ENCODE measurements at regions of chr4 and their contacts with region 1.

Region 1: DNA sequence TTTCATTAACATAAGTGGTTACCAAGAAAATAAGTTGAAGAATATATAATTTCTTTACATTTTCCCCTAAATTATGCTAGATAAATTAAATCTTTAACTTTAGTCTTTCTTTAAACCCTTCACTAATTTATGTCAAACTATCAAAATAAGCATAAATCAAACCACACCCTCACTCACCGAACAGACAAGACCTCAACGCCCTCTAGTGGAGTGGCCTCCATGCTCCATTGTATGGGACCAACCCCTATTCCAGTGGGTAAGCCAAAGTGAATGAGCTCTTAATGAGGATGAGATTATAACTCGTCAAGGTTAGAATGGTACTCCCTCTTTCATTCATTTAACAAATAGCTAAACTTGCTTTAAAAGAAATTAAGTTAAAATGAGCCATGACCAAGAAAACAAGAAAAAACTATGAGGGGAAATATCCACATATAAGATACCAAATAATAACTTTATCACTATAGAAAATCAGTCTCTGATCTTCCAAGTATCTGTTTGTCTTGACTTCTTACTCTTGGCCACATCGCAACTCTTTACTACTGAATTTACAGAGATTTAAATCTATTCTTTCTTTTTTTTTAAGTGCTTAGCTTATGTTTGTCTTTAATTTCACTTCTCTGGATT is 15.6 kb upstream of the BBS12 start:
- DNase-seq: peak; percentile 26 to 77 (median 67)
- ATAC-seq: peak; percentile 91
- H3K4me3 ChIP-seq: no peak overlapping the region
- H3K4me3 Mint-ChIP-seq: no peak overlapping the region
- H3K27ac ChIP-seq: no peak overlapping the region
- H3K27ac Mint-ChIP-seq: no peak overlapping the region
- H3K4me1 ChIP-seq: no peaks in the 10 kb centered on the region
- H3K4me1 Mint-ChIP-seq: peaks cover 3% of the 10 kb centered on the region
- H3K27me3 ChIP-seq: no peaks in the 10 kb centered on the region
- H3K27me3 Mint-ChIP-seq: peaks cover 6% of the 10 kb centered on the region
- CTCF ChIP-seq: peak; percentile 85

Region 2: GRCh38 chr4:121900132-121900983 is 816.6 kb before region 1 on chr4:
- CTCF ChIA-PET with region 1: interaction called, 11 read pairs
- POLR2A ChIA-PET with region 1: no interaction called
- intact Hi-C with region 1: loop called (anchors 1 to 5 kb)
- DNase-seq: peak in 8 of 9 experiments; percentile 9 to 77 (median 50)
- ATAC-seq: peak; percentile 80
- H3K4me3 ChIP-seq: no peak overlapping the region
- H3K4me3 Mint-ChIP-seq: no peak overlapping the region
- H3K27ac ChIP-seq: no peak overlapping the region
- H3K27ac Mint-ChIP-seq: no peak overlapping the region
- H3K4me1 ChIP-seq: peaks cover 4% of the 10 kb centered on the region
- H3K4me1 Mint-ChIP-seq: peaks cover 10% of the 10 kb centered on the region
- H3K27me3 ChIP-seq: no peaks in the 10 kb centered on the region
- H3K27me3 Mint-ChIP-seq: peaks cover 10% of the 10 kb centered on the region
- CTCF ChIP-seq: peak; percentile 72

Region 3: GRCh38 chr4:121950212-121950679 is 766.7 kb before region 1 on chr4:
- CTCF ChIA-PET with region 1: no interaction called
- POLR2A ChIA-PET with region 1: no interaction called
- intact Hi-C with region 1: loop called in 1 of 2 experiments (anchors 1 kb)
- DNase-seq: peak; percentile 74 to 91 (median 85)
- ATAC-seq: peak; percentile 84
- H3K4me3 ChIP-seq: peak overlapping the region; percentile 65 to 71
- H3K4me3 Mint-ChIP-seq: peak overlapping the region; percentile 88
- H3K27ac ChIP-seq: peak overlapping the region in 1 of 2 experiments; percentile 34
- H3K27ac Mint-ChIP-seq: no peak overlapping the region
- H3K4me1 ChIP-seq: peaks cover 3% of the 10 kb centered on the region
- H3K4me1 Mint-ChIP-seq: peaks cover 8% of the 10 kb centered on the region
- H3K27me3 ChIP-seq: peaks cover 7 to 8% of the 10 kb centered on the region in 2 experiments
- H3K27me3 Mint-ChIP-seq: peaks cover 51% of the 10 kb centered on the region
- CTCF ChIP-seq: peak; percentile 86

Region 4: DNA sequence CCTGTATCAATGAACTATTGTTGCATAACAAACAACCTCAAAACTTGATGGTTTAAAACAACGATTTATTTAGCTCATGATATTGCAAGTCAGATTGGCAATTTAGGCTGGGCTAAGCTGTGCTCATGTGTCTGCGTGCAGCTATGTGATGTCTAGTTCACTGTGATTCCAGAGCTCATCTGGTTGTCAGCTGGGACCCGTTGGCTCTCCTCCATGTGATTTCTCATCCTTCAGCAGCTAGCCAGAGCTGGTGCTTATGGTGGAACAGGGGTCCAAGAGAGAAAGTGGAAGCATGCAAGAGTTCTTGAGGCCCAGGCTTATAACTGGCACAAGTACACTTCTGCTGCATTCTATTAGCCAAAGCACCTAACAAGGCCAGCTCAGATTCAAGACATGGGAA is 736.3 kb before region 1 on chr4:
- CTCF ChIA-PET with region 1: no interaction called
- POLR2A ChIA-PET with region 1: no interaction called
- intact Hi-C with region 1: no loop called
- DNase-seq: no peak
- ATAC-seq: no peak
- H3K4me3 ChIP-seq: no peak overlapping the region
- H3K4me3 Mint-ChIP-seq: no peak overlapping the region
- H3K27ac ChIP-seq: no peak overlapping the region
- H3K27ac Mint-ChIP-seq: no peak overlapping the region
- H3K4me1 ChIP-seq: peaks cover 15% of the 10 kb centered on the region
- H3K4me1 Mint-ChIP-seq: peaks cover 6% of the 10 kb centered on the region
- H3K27me3 ChIP-seq: no peaks in the 10 kb centered on the region
- H3K27me3 Mint-ChIP-seq: peaks cover 5% of the 10 kb centered on the region
- CTCF ChIP-seq: no peak

Region 5: DNA sequence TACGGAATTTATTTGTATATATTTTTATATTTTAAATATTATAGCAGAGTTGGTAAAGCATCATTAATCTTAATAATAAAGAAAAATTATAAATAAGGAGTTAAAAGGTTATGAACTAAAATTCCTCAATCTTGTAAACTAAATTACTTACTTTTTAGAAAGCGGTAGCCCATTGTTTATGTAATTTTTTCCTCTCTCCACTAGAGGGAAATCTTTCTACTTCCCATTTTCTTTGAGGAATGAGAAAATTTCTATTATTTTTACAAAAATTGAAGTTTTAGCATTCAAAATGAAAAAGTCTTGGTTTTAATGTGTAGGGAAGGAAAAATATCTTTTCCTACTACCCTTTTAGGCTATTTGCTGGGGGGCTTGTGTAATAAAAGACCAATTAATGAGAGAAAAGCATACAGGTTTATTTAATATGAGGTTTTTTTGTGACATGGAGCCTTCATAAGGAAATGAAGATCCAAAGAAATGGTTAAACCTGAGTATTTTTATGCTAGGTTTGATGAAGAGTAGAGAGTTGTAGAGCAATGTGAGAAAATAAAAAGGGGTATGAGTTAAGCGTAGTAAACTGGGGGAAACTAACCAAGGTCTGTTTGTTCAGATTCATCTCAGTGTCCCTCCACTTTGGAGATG is 406.8 kb before region 1 on chr4:
- CTCF ChIA-PET with region 1: no interaction called
- POLR2A ChIA-PET with region 1: no interaction called
- intact Hi-C with region 1: loop called (anchors 1 to 2 kb)
- DNase-seq: peak in 1 of 9 experiments; percentile 11
- ATAC-seq: no peak
- H3K4me3 ChIP-seq: no peak overlapping the region
- H3K4me3 Mint-ChIP-seq: no peak overlapping the region
- H3K27ac ChIP-seq: no peak overlapping the region
- H3K27ac Mint-ChIP-seq: no peak overlapping the region
- H3K4me1 ChIP-seq: no peaks in the 10 kb centered on the region
- H3K4me1 Mint-ChIP-seq: no peaks in the 10 kb centered on the region
- H3K27me3 ChIP-seq: no peaks in the 10 kb centered on the region
- H3K27me3 Mint-ChIP-seq: no peaks in the 10 kb centered on the region
- CTCF ChIP-seq: peak; percentile 63

Region 6: DNA sequence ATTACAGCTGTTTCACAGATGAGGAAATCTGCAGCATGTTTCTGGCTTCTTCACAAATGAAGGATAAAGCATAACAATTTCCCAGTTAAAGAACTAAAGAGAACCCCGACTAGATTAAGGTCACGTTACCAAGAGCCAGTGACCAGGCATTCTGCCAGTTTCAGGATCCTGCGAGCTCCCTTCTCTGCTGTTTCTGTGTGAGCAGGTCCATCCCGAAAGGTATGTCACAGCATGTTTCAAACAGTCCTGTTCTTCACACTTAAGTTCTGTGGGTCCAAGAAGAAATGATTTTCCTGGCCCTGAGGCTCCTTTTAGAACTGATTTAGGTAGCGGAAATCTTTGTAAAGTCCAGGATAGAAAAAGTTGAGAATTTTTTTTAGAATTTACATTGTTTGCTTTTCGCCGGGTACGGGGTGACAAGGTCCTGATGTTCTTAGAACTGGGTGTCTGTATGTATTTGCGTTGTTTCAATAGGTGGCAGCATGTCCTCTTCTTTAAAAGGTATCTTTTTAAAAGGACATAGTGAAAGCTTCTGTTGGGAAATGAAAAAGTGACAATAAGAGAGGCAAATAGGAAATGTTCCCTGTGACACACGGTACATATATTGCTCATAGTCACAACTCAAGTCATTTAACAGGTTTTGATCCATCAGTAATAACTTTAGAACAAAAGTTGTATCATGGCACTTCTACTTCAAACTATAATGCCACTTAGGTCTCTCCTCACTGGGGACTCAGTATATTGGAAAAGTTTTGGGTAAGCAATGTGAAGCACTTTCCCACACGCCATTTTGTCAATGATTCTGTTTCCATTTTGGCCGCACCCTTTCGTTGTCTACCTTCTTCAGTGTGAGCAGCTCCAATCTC is 114.4 kb before region 1 on chr4:
- CTCF ChIA-PET with region 1: interaction called, 6 read pairs
- POLR2A ChIA-PET with region 1: no interaction called
- intact Hi-C with region 1: loop called in 1 of 2 experiments (anchors 5 kb)
- DNase-seq: peak in 2 of 9 experiments; percentile 31 to 51
- ATAC-seq: no peak
- H3K4me3 ChIP-seq: no peak overlapping the region
- H3K4me3 Mint-ChIP-seq: no peak overlapping the region
- H3K27ac ChIP-seq: no peak overlapping the region
- H3K27ac Mint-ChIP-seq: no peak overlapping the region
- H3K4me1 ChIP-seq: no peaks in the 10 kb centered on the region
- H3K4me1 Mint-ChIP-seq: no peaks in the 10 kb centered on the region
- H3K27me3 ChIP-seq: no peaks in the 10 kb centered on the region
- H3K27me3 Mint-ChIP-seq: peaks cover 20% of the 10 kb centered on the region
- CTCF ChIP-seq: no peak

Region 7: DNA sequence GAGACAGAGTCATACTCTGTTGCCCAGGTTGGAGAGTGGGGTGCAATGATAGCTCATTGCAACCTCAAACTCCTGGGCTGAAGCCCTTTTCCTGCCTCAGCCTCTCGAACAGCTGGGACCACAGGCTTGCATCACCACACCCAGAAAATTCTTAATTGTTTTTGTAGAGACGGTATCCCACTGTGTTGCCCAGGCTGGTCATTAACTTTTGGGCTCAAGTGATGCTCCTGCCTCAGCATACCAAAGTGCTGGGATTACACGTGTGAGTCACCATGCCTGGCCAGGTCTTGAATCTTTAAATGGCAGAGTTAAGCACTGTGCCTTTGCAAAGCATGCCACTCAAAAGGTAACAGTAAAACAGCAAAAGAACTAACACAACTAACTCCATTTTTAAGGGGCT is 13.1 kb before region 1 on chr4:
- CTCF ChIA-PET with region 1: interaction called, 13 read pairs
- POLR2A ChIA-PET with region 1: no interaction called
- intact Hi-C with region 1: no loop called
- DNase-seq: no peak
- ATAC-seq: no peak
- H3K4me3 ChIP-seq: no peak overlapping the region
- H3K4me3 Mint-ChIP-seq: no peak overlapping the region
- H3K27ac ChIP-seq: no peak overlapping the region
- H3K27ac Mint-ChIP-seq: no peak overlapping the region
- H3K4me1 ChIP-seq: no peaks in the 10 kb centered on the region
- H3K4me1 Mint-ChIP-seq: no peaks in the 10 kb centered on the region
- H3K27me3 ChIP-seq: no peaks in the 10 kb centered on the region
- H3K27me3 Mint-ChIP-seq: peaks cover 12% of the 10 kb centered on the region
- CTCF ChIP-seq: no peak

Region 8: DNA sequence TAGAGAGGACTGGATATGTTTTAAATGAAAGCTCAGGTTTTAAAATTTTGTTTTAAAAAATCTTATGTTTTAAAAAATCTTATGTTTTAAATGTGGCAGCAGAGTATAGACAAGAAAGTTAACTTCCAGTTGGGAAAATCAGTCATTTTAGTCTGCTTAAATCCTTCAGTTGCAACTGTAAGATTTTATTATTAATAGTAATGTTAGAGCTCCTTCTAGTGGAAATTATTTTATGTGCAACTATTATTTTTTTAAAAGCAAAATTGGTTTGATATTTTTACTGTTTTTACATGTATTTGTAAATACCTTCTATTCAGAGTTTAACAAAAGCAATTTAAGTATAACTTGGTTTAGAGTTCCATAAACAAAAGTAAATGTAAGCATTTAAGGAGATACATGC is 213.9 kb after region 1 on chr4:
- CTCF ChIA-PET with region 1: interaction called, 10 read pairs
- POLR2A ChIA-PET with region 1: no interaction called
- intact Hi-C with region 1: no loop called
- DNase-seq: peak in 2 of 9 experiments; percentile 12 to 37
- ATAC-seq: no peak
- H3K4me3 ChIP-seq: no peak overlapping the region
- H3K4me3 Mint-ChIP-seq: no peak overlapping the region
- H3K27ac ChIP-seq: no peak overlapping the region
- H3K27ac Mint-ChIP-seq: no peak overlapping the region
- H3K4me1 ChIP-seq: no peaks in the 10 kb centered on the region
- H3K4me1 Mint-ChIP-seq: peaks cover 9% of the 10 kb centered on the region
- H3K27me3 ChIP-seq: no peaks in the 10 kb centered on the region
- H3K27me3 Mint-ChIP-seq: no peaks in the 10 kb centered on the region
- CTCF ChIP-seq: peak; percentile 68

Measured in CD8-positive, alpha-beta T cell (primary cell).